ENCODE measurements at regions of chr20 and their contacts with region 1.

Region 1: GRCh38 chr20:21529863-21530262 is 16.0 kb upstream of the NKX2-2 start:
- DNase-seq: peak; percentile 39
- H3K4me3 Mint-ChIP-seq: no peak overlapping the region
- H3K27ac Mint-ChIP-seq: no peak overlapping the region
- H3K4me1 Mint-ChIP-seq: no peaks in the 10 kb centered on the region
- H3K27me3 Mint-ChIP-seq: peaks cover 32% of the 10 kb centered on the region
- CTCF ChIP-seq: peak; percentile 46

Region 2: DNA sequence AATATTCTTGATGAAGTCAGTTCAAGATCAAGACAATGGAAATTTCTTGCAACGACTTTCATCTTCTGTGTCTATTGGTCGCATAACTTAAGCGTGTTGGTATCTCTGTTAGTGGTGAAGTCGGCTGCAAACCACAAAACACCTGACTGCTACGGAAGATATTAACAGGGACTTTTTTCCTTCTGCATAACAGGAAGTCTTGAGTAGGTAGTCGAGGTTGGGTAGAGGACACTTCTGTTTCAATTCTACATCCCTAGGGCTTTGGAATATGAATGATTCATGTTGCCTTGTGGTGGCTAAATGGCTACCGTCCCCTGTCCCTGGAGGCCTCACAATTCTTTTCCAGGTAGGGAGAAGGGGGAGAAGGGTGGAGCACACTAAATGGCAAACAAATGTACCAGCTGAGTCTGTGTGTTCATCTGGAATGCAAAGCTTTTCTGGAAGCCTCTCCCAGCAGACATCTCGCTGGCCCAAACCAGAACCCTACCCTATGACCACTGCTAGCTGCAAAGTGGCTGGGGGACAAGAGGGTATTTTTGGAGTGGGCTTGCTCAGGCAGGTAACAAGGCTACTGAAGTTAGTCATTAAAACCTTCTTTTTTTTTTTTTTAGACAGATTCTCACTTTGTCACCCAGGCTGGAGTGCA is 18.6 kb after region 1 on chr20:
- CTCF ChIA-PET with region 1: interaction called, 19 read pairs
- POLR2A ChIA-PET with region 1: interaction called, 3 read pairs
- intact Hi-C with region 1: no loop called
- DNase-seq: no peak
- H3K4me3 Mint-ChIP-seq: no peak overlapping the region
- H3K27ac Mint-ChIP-seq: no peak overlapping the region
- H3K4me1 Mint-ChIP-seq: no peaks in the 10 kb centered on the region
- H3K27me3 Mint-ChIP-seq: peaks cover 13% of the 10 kb centered on the region
- CTCF ChIP-seq: no peak

Region 3: DNA sequence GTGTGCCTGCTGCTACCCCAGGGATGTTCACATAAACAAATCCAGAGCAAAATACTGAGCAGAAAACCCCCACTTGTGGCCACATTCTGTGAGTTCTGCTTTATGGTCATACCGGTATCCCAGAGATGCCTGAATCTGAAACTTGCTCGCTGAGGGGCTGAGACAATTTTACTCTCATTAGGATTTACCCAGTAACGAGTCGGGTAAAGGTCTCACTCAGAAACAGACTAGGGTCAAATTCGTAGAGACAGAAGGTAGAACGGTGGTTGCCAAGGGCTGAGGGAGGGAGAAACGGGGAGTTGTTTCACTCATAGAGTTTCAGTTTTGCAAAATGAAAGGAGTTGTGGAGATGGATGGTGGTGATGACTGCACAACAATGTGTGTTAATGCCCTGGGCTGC is 29.4 kb after region 1 on chr20:
- CTCF ChIA-PET with region 1: interaction called, 12 read pairs
- POLR2A ChIA-PET with region 1: no interaction called
- intact Hi-C with region 1: no loop called
- DNase-seq: no peak
- H3K4me3 Mint-ChIP-seq: no peak overlapping the region
- H3K27ac Mint-ChIP-seq: no peak overlapping the region
- H3K4me1 Mint-ChIP-seq: peaks cover 4% of the 10 kb centered on the region
- H3K27me3 Mint-ChIP-seq: peaks cover 52% of the 10 kb centered on the region
- CTCF ChIP-seq: no peak

Region 4: GRCh38 chr20:21577551-21577950 is 47.7 kb after region 1 on chr20:
- CTCF ChIA-PET with region 1: interaction called, 34 read pairs
- POLR2A ChIA-PET with region 1: interaction called, 6 read pairs
- intact Hi-C with region 1: loop called (anchors 1 kb)
- DNase-seq: no peak
- H3K4me3 Mint-ChIP-seq: no peak overlapping the region
- H3K27ac Mint-ChIP-seq: no peak overlapping the region
- H3K4me1 Mint-ChIP-seq: no peaks in the 10 kb centered on the region
- H3K27me3 Mint-ChIP-seq: peaks cover 72% of the 10 kb centered on the region
- CTCF ChIP-seq: no peak

Region 5: GRCh38 chr20:21739682-21740081 is 209.8 kb after region 1 on chr20:
- CTCF ChIA-PET with region 1: no interaction called
- POLR2A ChIA-PET with region 1: no interaction called
- intact Hi-C with region 1: no loop called
- DNase-seq: no peak
- H3K4me3 Mint-ChIP-seq: no peak overlapping the region
- H3K27ac Mint-ChIP-seq: no peak overlapping the region
- H3K4me1 Mint-ChIP-seq: no peaks in the 10 kb centered on the region
- H3K27me3 Mint-ChIP-seq: no peaks in the 10 kb centered on the region
- CTCF ChIP-seq: no peak

Region 6: DNA sequence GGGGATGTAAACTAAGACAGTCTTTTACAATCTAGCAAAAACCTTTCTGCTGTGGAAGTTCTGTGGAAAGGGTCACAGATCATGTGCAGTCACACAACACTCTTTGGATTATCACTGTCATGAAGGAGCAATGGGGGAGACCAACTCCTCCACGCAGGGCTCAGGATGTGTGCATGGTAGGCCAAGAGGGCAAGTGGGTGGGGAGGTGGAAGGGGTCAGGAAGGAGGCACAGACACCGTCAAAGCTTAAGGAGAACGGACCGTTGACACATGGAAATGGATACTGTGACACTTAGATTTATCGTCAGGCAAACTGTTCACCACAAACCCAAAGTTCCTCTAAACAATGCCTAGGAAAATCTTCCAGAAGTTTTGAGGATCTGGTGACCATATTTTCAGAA is 391.4 kb after region 1 on chr20:
- CTCF ChIA-PET with region 1: no interaction called
- POLR2A ChIA-PET with region 1: no interaction called
- intact Hi-C with region 1: no loop called
- DNase-seq: no peak
- H3K4me3 Mint-ChIP-seq: no peak overlapping the region
- H3K27ac Mint-ChIP-seq: no peak overlapping the region
- H3K4me1 Mint-ChIP-seq: no peaks in the 10 kb centered on the region
- H3K27me3 Mint-ChIP-seq: no peaks in the 10 kb centered on the region
- CTCF ChIP-seq: no peak

Measured in MCF 10A (cell line).